PC-9 (cell line): ENCODE measurements at regions of chr7 and their contacts with region 1.

Region 1: DNA sequence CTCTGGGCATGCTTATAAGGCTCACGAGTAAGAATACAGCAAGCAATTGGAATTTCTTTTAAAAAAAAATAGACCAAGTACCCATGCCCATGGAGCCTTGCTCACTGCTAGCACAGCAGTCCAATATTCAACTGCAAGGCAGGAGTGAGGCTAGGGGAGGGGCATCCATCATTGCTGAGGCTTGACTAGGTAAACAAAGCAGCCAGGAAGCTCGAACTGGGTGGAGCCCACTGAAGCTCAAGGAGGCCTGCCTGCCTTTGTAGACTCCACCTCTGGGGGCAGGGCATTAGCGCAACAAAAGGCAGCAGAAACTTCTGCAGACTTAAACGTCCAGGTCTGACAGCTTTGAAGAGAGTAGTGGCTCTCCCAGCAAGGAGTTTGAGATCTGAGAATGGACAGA is 84.0 kb upstream of the STEAP1 start:
- DNase-seq: peak; percentile 41 to 54
- H3K4me3 ChIP-seq: no peak overlapping the region
- H3K27ac ChIP-seq: no peak overlapping the region
- H3K4me1 ChIP-seq: no peaks in the 10 kb centered on the region
- H3K27me3 ChIP-seq: no peaks in the 10 kb centered on the region
- CTCF ChIP-seq: no peak

Region 2: DNA sequence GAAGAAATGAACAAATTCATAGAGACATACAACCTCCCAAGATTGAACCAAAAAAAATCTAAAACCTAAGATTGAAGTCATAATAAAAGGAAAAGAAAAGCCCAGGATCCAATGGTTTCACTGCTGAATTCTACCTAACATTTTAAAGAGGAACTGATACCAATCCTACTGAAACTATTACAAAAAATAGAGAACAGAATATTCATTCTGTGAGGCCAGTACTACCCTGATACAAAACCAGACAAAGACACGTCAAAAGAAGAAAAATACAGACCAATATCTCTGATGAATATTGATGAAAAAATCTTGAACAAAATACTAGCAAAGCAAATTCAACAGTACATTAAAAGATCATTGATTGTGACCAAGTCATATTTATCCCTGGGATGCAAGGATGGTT is 44.5 kb before region 1 on chr7:
- CTCF ChIA-PET with region 1: interaction called, 7 read pairs
- POLR2A ChIA-PET with region 1: no interaction called
- intact Hi-C with region 1: loop called (anchors 1 kb)
- DNase-seq: no peak
- H3K4me3 ChIP-seq: no peak overlapping the region
- H3K27ac ChIP-seq: no peak overlapping the region
- H3K4me1 ChIP-seq: no peaks in the 10 kb centered on the region
- H3K27me3 ChIP-seq: no peaks in the 10 kb centered on the region
- CTCF ChIP-seq: no peak

Region 3: GRCh38 chr7:90824386-90825307 is 754.4 kb after region 1 on chr7:
- CTCF ChIA-PET with region 1: no interaction called
- POLR2A ChIA-PET with region 1: no interaction called
- intact Hi-C with region 1: no loop called
- DNase-seq: no peak
- H3K4me3 ChIP-seq: no peak overlapping the region
- H3K27ac ChIP-seq: no peak overlapping the region
- H3K4me1 ChIP-seq: no peaks in the 10 kb centered on the region
- H3K27me3 ChIP-seq: no peaks in the 10 kb centered on the region
- CTCF ChIP-seq: no peak